Posterior vena cava (tissue), 2 donors: ENCODE measurements at regions of chr1 and their contacts with region 1.

Region 1: GRCh38 chr1:41573785-41574713 is 89.6 kb upstream of the EDN2 start:
- DNase-seq: peak; percentile 93

Region 2: DNA sequence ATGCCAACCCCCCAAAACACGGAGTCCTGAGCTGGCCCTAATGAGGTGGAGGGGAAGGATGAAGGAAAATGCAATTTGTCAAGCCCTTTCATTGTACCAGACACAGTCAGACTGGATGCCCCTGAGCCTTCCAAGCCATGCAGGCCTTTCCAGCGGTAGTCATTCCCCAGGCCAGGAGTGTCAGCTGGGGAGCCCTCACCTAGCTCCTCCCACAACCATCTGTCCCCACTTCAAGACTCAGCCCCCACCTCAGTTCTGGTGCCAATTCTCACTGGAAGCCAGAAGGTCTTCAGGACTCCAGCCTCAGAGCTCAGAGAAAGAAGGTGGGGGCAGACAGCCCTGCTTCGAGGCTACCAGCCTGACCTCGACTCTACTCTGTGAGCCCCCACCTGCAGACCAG is 90.8 kb after region 1 on chr1:
- intact Hi-C with region 1: loop called in 1 of 2 experiments (anchors 1 kb)
- DNase-seq: no peak

Region 3: GRCh38 chr1:42173155-42173933 is 599.3 kb after region 1 on chr1:
- intact Hi-C with region 1: loop called in 1 of 2 experiments (anchors 5 kb)
- DNase-seq: peak; percentile 89

Region 4: GRCh38 chr1:43327549-43328292 is 1753.7 kb after region 1 on chr1:
- intact Hi-C with region 1: no loop called
- DNase-seq: no peak